Mammary epithelial cell (primary cell): ENCODE measurements at regions of chr2 and their contacts with region 1.

Region 1: DNA sequence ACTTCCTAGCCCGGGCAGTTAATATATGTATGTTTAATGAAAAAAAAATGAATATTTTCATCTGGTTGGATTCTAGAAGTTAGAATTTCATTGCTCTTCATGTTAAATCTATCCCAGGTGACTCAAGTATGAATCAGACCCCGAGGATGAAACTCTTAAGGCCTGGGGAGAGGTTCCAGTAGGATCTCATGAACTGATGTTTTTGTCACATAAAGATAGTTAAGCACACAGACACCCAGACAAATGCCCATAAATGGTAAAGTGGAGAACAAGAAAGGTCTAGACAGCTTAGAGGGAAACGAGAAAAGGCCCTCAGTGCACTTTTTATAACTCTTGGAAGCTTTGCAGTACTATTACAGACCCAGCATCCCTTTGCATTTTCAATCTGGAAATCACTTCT is 114.1 kb downstream of the RIF1 start:
- DNase-seq: peak; percentile 11
- H3K4me3 ChIP-seq: no peak overlapping the region
- H3K27ac ChIP-seq: no peak overlapping the region
- H3K4me1 ChIP-seq: no peaks in the 10 kb centered on the region
- H3K27me3 ChIP-seq: no peaks in the 10 kb centered on the region
- CTCF ChIP-seq: no peak

Region 2: GRCh38 chr2:151422917-151423439 is 100.9 kb before region 1 on chr2:
- CTCF ChIA-PET with region 1: no interaction called
- dilution Hi-C with region 1: loop called (anchors 5 kb)
- in situ Hi-C with region 1: no loop called
- intact Hi-C with region 1: no loop called
- DNase-seq: no peak
- H3K4me3 ChIP-seq: no peak overlapping the region
- H3K27ac ChIP-seq: no peak overlapping the region
- H3K4me1 ChIP-seq: no peaks in the 10 kb centered on the region
- H3K27me3 ChIP-seq: no peaks in the 10 kb centered on the region
- CTCF ChIP-seq: no peak